ENCODE measurements at regions of chr3 and their contacts with region 1.

Region 1: DNA sequence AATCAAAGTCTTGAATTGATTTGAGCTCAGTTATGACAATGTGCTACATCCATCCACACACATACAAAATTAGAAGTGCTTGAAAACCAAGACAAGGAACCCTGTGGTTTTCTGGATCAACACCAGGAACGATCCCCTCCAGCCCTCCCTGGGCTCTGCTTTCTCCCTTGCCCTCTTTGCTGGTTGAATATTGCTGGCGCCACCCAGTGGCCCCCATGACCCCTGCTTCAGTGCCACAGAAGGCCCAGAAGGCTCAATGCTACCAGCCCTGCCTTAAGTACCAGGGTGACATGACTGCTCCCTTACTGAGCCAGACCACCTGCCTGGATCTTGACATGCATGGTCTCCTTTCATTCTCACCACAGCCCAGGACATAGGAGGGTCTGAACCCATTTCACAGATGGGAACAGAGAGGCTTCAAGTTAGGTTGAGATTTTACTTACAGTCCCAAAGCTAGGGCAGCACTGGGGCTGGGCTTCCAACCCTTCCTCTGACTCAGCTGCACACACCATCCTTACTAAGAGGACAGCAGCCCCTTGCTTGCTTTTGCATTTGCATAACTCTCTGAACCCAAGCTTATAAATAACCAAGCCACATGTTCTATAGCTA is 15.0 kb downstream of the IL12A start:
- DNase-seq: no peak
- H3K4me3 ChIP-seq: no peak overlapping the region
- H3K27ac ChIP-seq: no peak overlapping the region
- H3K27me3 ChIP-seq: no peaks in the 10 kb centered on the region
- CTCF ChIP-seq: peak; percentile 41

Region 2: DNA sequence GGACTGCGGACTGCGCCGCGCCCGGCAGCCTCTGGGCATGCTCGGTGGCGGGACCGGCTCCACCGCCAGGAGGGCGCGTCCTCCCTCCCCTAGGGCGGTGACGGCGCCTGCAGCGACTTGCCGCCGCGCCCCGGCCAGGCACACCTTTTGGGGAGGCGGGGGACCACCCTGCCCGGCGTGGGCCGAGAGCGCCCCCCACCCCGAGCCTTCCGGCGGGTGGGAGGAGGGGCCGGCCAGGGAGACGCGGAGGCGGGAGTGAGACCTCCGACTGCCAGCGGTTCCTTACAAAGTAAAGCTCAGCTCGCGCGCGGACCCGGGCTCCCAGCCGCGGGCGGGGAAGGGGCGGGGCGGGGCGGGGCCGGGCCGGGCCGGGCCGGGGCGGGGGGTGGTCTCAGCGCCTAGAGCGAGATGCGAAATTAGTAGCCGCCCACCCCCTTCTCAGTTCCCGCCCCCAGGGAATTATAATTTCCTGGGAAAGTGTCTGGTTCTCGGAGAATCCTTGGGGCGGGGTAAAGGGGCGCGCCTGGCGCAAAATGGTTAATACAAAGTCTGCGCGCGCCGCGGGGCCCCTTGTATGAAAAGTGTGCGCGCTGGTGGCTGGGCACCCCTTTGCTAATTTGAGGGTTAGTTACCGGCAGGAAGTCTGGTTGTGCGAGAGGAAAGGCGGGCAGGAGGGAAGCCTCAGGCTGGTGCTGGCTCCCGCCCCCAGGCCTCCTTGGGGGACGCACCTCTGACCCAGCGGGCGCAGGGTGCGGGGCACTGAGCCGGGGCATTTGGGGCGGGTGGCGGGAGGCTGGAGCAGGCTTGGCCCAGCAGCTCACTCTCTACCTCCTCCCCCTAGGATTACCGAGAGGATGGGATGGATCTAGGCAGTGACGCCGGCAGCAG is 239.8 kb before region 1 on chr3:
- CTCF ChIA-PET with region 1: interaction called, 13 read pairs
- POLR2A ChIA-PET with region 1: no interaction called
- DNase-seq: peak; percentile 54
- H3K4me3 ChIP-seq: peak overlapping the region; percentile 75
- H3K27ac ChIP-seq: peak overlapping the region; percentile 95
- H3K27me3 ChIP-seq: no peaks in the 10 kb centered on the region
- CTCF ChIP-seq: peak; percentile 25

Region 3: GRCh38 chr3:159839561-159840379 is 163.9 kb before region 1 on chr3:
- CTCF ChIA-PET with region 1: interaction called, 12 read pairs
- POLR2A ChIA-PET with region 1: no interaction called
- DNase-seq: no peak
- H3K4me3 ChIP-seq: no peak within 1 kb of the TSS
- H3K27ac ChIP-seq: no peak within 1 kb of the TSS
- H3K27me3 ChIP-seq: no peaks in the 10 kb centered on the region
- CTCF ChIP-seq: no peak

Region 4: GRCh38 chr3:159872374-159873109 is 131.1 kb before region 1 on chr3:
- CTCF ChIA-PET with region 1: interaction called, 13 read pairs
- POLR2A ChIA-PET with region 1: no interaction called
- DNase-seq: peak; percentile 74
- H3K4me3 ChIP-seq: no peak overlapping the region
- H3K27ac ChIP-seq: peak overlapping the region; percentile 71
- H3K27me3 ChIP-seq: no peaks in the 10 kb centered on the region
- CTCF ChIP-seq: peak; percentile 44

Region 5: GRCh38 chr3:159904455-159904854 is 99.2 kb before region 1 on chr3:
- CTCF ChIA-PET with region 1: interaction called, 685 read pairs
- POLR2A ChIA-PET with region 1: no interaction called
- DNase-seq: no peak
- H3K4me3 ChIP-seq: no peak overlapping the region
- H3K27ac ChIP-seq: no peak overlapping the region
- H3K27me3 ChIP-seq: no peaks in the 10 kb centered on the region
- CTCF ChIP-seq: no peak

Region 6: DNA sequence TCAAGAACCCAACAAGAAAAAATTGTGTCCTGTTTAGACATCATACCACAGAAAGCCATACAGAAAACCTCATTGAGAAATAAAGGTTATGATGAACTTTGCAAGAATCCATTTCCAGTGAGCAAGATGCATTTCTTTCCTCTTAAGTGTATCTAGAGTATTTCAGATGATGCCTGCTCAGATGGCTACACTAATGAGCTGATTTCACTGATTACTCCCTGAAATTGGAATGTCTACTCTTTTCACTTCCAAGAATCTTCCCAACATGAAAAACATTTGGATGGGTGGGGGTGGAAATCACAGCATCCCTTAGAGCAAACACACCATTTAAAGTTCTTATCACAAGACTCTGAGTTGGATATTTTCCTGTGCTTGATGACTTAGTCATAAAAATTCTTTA is 56.4 kb before region 1 on chr3:
- CTCF ChIA-PET with region 1: interaction called, 10 read pairs
- POLR2A ChIA-PET with region 1: no interaction called
- DNase-seq: peak; percentile 61
- H3K4me3 ChIP-seq: no peak overlapping the region
- H3K27ac ChIP-seq: no peak overlapping the region
- H3K27me3 ChIP-seq: no peaks in the 10 kb centered on the region
- CTCF ChIP-seq: no peak

Region 7: DNA sequence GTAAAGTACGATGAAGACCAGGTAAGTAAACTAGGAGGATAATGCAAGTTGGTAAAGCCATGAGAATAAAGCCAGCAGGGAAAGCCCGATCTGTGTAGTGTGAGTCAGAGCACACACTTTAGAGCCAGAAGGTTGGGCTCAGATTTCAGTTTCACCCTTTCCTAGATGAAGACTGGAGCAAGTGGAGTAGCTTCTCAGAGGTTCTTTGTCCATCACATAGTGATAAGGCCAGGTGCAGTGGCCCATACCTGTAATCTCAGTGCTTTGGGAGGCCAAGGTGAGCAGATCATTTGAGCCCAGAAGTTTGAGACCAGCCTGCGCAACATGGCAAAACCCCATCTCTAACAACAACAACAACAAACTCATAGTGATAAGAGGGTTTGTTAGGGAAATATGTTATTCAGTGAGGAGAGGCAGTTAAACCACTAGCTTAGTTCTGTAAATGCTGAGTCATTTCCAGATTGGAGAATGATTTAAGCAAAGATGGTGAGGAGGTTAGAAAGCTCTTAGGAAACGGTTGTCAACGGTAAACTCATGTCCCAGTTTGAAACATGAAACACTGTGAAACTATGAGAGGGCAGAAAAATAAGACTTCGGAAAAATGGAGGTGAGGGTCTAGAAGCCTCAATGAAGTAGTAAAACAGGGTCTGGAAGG is 24.0 kb after region 1 on chr3:
- CTCF ChIA-PET with region 1: interaction called, 15 read pairs
- POLR2A ChIA-PET with region 1: no interaction called
- DNase-seq: peak; percentile 62
- H3K4me3 ChIP-seq: no peak overlapping the region
- H3K27ac ChIP-seq: peak overlapping the region; percentile 97
- H3K27me3 ChIP-seq: no peaks in the 10 kb centered on the region
- CTCF ChIP-seq: no peak

Region 8: GRCh38 chr3:160099834-160100233 is 96.2 kb after region 1 on chr3:
- CTCF ChIA-PET with region 1: no interaction called
- POLR2A ChIA-PET with region 1: no interaction called
- DNase-seq: no peak
- H3K4me3 ChIP-seq: no peak overlapping the region
- H3K27ac ChIP-seq: no peak overlapping the region
- H3K27me3 ChIP-seq: peaks cover 4% of the 10 kb centered on the region
- CTCF ChIP-seq: no peak

Region 9: DNA sequence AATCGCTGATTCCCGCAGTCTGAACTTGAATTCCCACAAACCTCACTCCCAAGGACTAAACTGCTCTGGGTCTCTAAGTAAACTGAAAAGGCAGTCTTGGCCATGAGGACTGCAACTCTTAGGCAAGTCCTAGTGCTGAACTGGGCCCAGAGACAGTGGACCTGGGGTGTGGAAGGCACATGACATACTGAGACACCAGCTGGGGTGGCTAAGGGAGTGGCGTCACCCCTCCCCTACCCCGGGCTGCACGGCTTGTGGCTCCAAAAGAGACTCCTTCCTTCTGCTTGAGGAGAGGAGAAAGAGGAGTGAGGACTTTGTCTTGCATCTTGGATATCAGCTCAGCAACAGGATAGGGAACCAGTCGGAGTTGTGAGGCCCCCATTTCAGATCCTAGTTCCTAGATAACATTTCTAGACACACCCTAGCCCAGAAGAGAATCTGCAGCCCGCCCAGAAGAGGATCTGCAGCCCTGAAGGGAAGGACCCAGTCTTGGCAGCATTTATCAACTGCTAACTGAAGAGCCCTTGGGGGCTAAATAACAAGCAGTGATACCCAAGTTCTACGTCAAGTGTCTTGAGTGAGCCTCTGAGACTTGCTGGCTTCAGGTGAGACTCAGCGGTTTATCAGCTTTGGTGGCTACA is 110.9 kb after region 1 on chr3:
- CTCF ChIA-PET with region 1: no interaction called
- POLR2A ChIA-PET with region 1: no interaction called
- DNase-seq: no peak
- H3K4me3 ChIP-seq: no peak overlapping the region
- H3K27ac ChIP-seq: no peak overlapping the region
- H3K27me3 ChIP-seq: peaks cover 8% of the 10 kb centered on the region
- CTCF ChIP-seq: no peak

Measured in AG04450 (cell line).